Mammary epithelial cell (primary cell): ENCODE measurements at regions of chr2 and their contacts with region 1.

Region 1: DNA sequence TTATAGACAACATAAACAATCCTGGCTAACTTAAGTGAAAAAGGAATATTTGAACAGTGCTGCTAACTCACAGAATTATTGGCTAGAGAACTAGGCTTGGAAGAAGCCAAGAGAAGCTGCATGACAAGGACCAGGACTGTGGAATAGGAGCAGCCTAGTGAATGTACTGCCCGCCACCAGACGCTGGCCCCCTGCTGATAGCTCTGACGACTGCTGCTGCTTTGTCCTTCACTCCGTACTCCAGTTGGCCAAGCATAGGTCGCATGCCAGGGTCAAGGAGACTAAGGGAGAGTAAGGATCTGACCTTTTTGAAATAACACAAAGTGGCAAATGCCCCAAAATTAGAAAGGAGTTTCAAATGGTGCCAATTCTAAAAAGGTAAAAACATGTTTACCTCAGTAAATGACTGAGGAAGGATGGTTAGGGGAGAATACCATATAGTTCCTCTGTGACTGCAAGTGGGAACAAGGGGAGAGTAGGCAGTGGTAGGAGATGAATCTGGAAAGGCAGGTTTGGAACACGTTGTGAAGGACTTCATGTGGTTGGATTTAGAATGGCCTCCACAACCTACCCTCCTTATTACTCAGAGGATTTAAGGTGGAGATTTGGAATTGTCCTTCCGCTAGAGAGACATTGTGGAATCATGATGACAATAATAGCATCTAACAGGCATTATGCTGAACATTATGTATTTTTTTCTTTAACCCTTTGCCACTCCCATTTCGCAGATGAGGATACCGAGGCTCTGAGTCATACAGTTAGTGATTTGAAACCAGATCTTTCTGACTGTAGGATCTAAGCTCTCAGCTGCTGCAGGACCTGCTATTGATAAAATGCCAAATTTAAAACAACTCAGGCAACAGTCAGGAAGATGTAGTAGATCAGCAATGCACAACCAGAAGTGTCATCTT is 19.5 kb downstream of the STRADB start:
- DNase-seq: peak; percentile 17
- H3K4me3 ChIP-seq: no peak overlapping the region
- H3K27ac ChIP-seq: no peak overlapping the region
- H3K4me1 ChIP-seq: peaks cover 18% of the 10 kb centered on the region
- H3K27me3 ChIP-seq: no peaks in the 10 kb centered on the region
- CTCF ChIP-seq: no peak

Region 2: GRCh38 chr2:201313362-201313761 is 157.7 kb before region 1 on chr2:
- CTCF ChIA-PET with region 1: no interaction called
- dilution Hi-C with region 1: no loop called
- in situ Hi-C with region 1: no loop called
- intact Hi-C with region 1: no loop called
- DNase-seq: peak; percentile 52
- H3K4me3 ChIP-seq: no peak overlapping the region
- H3K27ac ChIP-seq: no peak overlapping the region
- H3K4me1 ChIP-seq: no peaks in the 10 kb centered on the region
- H3K27me3 ChIP-seq: no peaks in the 10 kb centered on the region
- CTCF ChIP-seq: no peak

Region 3: DNA sequence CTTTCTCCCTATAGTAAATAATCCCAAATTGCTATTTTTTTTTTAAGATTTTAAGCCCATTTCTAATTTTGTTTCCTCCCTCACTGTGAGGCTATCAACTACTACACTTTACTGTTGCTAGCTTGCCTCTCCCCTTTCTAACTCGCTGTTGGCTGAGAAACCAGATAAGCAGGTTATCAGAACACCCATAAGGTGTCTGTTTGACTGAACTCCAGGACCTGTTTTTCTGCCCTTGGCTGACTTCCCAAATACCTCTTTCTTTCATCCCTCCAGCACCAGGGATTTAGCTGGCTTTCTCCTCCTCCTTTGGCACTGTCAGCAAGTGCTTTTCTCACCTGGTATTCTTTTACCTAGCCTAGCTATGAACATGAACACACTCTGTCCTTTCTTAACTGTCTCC is 30.9 kb before region 1 on chr2:
- CTCF ChIA-PET with region 1: no interaction called
- dilution Hi-C with region 1: loop called (anchors 5 kb)
- in situ Hi-C with region 1: no loop called
- intact Hi-C with region 1: no loop called
- DNase-seq: peak; percentile 67
- H3K4me3 ChIP-seq: no peak overlapping the region
- H3K27ac ChIP-seq: no peak overlapping the region
- H3K4me1 ChIP-seq: peaks cover 5% of the 10 kb centered on the region
- H3K27me3 ChIP-seq: no peaks in the 10 kb centered on the region
- CTCF ChIP-seq: no peak